OCI-LY7 (cell line): ENCODE measurements at regions of chr5 and their contacts with region 1.

Region 1: GRCh38 chr5:50535393-50535792 is 94.3 kb upstream of the EMB start:
- DNase-seq: peak; percentile 65
- H3K4me3 ChIP-seq: no peak overlapping the region
- H3K27ac ChIP-seq: no peak overlapping the region
- H3K4me1 ChIP-seq: peaks cover 30% of the 10 kb centered on the region
- CTCF ChIP-seq: no peak

Region 2: GRCh38 chr5:50553560-50553984 is 18.2 kb after region 1 on chr5:
- CTCF ChIA-PET with region 1: no interaction called
- POLR2A ChIA-PET with region 1: interaction called, 11 read pairs
- intact Hi-C with region 1: no loop called
- DNase-seq: no peak
- H3K4me3 ChIP-seq: no peak overlapping the region
- H3K27ac ChIP-seq: no peak overlapping the region
- H3K4me1 ChIP-seq: peaks cover 10% of the 10 kb centered on the region
- CTCF ChIP-seq: no peak